H1 (cell line): ENCODE measurements at regions of chr11 and their contacts with region 1.

Region 1: DNA sequence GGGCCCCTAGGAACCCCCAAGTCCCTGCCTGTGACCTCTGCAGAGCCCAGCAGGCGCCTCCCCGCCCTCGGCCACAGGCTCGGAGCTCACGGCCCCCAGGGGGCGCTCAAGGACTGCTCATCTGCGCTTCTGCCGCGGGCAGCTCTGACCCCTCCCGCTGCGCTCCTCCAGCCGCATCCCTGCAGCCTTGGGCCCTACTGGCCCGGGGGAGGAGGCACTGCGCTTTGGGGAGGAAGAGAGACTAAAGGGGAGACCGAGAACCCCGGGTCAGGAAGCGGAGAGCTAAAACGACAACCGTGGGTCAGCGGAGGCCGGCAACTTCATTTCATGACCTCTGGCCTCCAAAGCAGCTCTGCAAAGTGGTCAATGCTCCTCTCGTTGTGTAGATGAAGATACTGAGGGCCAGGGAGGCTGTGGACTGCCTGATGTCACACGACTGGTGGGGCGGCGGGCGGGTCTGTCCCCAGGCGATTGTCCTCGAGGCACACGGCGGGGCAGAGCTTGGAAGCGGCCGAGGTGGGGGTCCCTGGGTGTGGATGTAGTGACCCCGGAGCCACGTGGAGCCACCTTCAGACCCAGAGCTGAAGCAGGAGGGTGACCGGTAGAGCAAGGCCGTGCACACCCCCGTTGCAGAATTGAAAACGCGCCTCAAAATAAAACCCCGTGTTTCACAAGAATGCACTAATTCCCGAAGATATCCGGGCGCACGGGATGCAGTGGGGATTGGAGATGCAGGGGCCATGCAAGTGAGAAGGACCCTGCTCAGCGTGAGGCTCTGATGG is 2.7 kb upstream of the KRTAP5-6 start:
- DNase-seq: peak; percentile 84 to 98
- H3K4me3 ChIP-seq: peak overlapping the region in 3 of 4 experiments; percentile 29 to 59 (median 45); a peak in 3 of 8 replicates
- H3K27ac ChIP-seq: no peak overlapping the region
- H3K4me1 ChIP-seq: peaks cover 0 to 10% (median 3%) of the 10 kb centered on the region in 4 experiments; a peak in 3 of 7 replicates
- H3K27me3 ChIP-seq: peaks cover 0 to 7% (median 0%) of the 10 kb centered on the region in 4 experiments; a peak in 3 of 7 replicates
- CTCF ChIP-seq: peak; percentile 81 to 97 (median 86)
- EP300 ChIP-seq: peak in 1 of 2 experiments; percentile 49; a peak in 1 of 3 replicates
- POLR2A ChIP-seq: no peak
- RAD21 ChIP-seq: peak; percentile 91 to 95

Region 2: DNA sequence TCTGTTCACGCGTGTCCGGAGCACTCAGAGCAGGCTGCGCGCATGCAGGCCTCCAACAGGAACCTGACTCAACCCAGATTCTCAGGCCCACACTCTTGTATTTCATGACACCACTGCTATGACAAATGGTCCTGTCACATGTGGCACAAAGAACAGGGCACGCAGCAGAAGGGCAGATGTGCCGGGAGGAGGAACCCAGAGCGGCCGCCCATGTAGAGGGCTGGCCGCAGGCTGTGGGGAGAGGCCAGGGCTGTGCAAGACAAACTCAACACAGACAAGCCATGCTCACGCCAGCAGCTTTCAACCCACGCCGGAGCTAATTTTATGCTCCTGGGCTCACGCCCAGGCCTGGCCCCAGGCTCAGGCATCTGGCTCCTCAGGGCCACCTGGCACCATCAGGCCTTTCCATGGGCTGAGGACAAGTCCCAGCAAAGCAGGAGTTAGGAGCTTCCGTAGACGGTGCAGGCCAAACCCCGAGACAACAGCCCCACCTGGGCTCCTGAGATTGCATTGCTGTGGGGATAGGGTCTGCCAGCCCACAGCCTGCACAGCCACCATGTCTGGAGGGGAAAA is 162.2 kb before region 1 on chr11:
- CTCF ChIA-PET with region 1: no interaction called
- POLR2A ChIA-PET with region 1: no interaction called
- DNase-seq: no peak
- H3K4me3 ChIP-seq: no peak overlapping the region
- H3K27ac ChIP-seq: no peak overlapping the region
- H3K4me1 ChIP-seq: peaks cover 0 to 2% (median 0%) of the 10 kb centered on the region in 4 experiments; a peak in 1 of 7 replicates
- H3K27me3 ChIP-seq: no peaks in the 10 kb centered on the region
- CTCF ChIP-seq: no peak
- EP300 ChIP-seq: no peak
- POLR2A ChIP-seq: no peak
- RAD21 ChIP-seq: no peak

Region 3: DNA sequence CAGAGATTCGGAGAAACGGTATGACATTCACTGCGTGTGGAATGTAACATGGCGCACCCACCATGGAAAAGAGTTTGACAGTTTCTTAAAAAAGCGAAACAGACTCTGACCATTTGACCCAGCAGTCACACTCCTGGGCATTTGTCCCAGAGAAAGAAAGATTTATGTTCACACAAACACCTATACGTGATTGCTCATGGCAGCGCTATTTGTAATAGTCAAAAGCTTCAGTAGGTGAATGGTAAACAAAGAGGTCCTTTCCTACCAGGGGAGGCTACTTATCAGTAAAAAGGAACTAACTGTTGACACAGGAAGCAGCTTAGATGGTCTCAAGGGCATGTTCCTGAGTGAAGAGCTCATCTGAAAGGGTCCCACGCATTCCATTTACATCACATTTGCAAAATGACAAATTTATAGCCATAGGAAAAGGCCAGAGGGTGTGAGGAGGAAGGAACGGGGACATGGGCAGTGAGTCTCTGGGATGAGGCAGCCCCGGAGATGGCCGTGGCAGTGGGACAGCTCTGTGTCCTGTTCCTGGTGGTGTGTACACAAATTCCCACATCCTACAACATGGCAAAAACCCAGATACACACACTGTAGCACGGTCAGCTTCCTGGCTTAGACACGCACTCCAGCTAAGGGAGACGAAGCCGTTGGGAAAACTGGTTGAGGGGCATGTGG is 11.9 kb before region 1 on chr11:
- CTCF ChIA-PET with region 1: interaction called, 41 read pairs
- POLR2A ChIA-PET with region 1: no interaction called
- DNase-seq: no peak
- H3K4me3 ChIP-seq: no peak overlapping the region
- H3K27ac ChIP-seq: no peak overlapping the region; the same call in 1 of the 2 replicates
- H3K4me1 ChIP-seq: no peaks in the 10 kb centered on the region
- H3K27me3 ChIP-seq: no peaks in the 10 kb centered on the region
- CTCF ChIP-seq: no peak
- EP300 ChIP-seq: no peak
- POLR2A ChIP-seq: no peak
- RAD21 ChIP-seq: no peak

Region 4: DNA sequence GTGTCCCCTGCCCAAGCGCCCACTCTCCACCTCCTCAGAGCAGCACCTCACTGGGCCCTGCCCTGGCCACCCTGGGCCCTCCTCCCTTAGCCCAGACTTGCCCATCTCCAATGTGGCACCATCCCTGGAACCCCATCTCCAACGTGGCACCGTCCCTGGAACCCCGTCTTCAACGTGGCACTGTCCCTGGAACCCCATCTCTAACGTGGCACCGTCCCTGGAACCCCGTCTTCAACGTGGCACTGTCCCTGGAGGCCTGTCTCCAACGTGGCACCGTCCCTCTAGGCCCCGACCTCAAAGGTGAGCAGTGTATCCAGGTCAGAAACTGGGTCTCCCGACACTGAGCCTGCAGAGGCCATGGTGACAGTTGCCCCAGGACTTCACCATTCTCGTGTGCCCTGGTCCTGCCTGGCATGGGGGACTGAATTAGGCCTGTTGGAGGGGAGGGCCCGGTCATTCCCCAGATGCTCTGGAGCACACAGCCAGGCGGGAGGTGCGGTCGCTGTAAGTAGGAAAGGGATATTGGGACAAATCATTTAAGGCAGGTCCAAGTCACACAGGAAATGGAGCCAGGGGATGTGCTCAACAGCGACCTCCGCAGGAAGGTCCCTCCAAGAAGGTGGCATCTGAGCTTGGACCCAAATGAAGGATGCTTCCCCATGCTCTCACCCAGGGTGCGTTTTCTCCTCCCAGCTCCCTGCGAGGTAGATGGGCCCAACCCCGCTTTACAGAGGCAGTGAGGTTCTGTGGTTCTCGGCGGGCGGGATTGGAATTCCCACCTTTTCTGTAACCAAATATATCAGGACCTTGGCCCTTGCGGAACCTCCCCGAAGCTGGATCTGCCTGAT is 71.8 kb after region 1 on chr11:
- CTCF ChIA-PET with region 1: interaction called, 16 read pairs
- POLR2A ChIA-PET with region 1: no interaction called
- DNase-seq: peak in 1 of 2 experiments; percentile 77
- H3K4me3 ChIP-seq: no peak overlapping the region
- H3K27ac ChIP-seq: no peak overlapping the region
- H3K4me1 ChIP-seq: peaks cover 0 to 6% (median 3%) of the 10 kb centered on the region in 4 experiments; a peak in 5 of 7 replicates
- H3K27me3 ChIP-seq: no peaks in the 10 kb centered on the region
- CTCF ChIP-seq: peak; percentile 44 to 85 (median 79)
- EP300 ChIP-seq: no peak
- POLR2A ChIP-seq: no peak
- RAD21 ChIP-seq: peak; percentile 32 to 44

Region 5: DNA sequence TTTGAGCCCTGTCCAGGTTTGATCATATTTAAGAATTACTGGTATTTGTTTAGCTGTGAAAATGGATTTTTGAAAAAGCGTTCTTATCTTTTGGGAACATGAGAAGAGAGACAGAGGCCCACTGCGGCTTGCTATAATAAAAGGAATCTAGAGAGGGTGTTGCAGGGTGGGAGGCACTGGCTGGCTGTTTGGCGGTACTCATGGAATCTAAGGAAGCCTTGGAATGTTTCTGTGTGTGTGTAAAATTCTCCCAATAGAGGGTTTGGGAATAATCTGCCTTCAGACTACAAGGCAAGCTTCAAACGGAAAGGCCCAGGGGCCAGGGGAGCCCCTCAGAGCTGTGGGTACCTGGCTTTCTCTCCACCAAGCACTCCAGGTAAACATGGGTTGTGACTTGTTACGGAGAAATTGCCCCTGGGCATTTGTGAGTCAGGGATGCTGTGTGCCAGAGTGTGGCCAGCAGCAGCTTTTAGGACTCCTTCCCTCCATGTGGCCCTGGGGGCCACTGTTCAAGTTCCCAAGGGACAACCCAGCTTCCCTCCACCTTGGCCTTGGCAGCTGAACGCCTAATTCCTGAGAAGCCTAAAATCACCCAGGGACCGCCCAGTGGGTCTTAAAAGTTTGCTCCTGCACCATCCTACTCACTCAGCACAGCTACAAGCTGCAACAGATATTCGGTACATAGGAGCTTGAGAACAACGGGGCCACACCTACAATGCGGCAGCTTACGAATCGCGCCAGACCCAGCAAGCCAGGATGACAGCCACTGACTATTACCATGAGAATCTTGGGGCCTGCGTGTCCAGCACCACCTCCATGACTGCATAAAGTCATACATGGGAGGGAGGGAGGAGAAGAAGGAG is 126.4 kb after region 1 on chr11:
- CTCF ChIA-PET with region 1: interaction called, 255 read pairs
- POLR2A ChIA-PET with region 1: no interaction called
- DNase-seq: no peak
- H3K4me3 ChIP-seq: no peak overlapping the region
- H3K27ac ChIP-seq: no peak overlapping the region
- H3K4me1 ChIP-seq: peaks cover 0 to 2% (median 0%) of the 10 kb centered on the region in 4 experiments; a peak in 3 of 7 replicates
- H3K27me3 ChIP-seq: no peaks in the 10 kb centered on the region; a peak in 1 of 7 replicates
- CTCF ChIP-seq: no peak
- EP300 ChIP-seq: no peak
- POLR2A ChIP-seq: no peak
- RAD21 ChIP-seq: no peak

Region 6: DNA sequence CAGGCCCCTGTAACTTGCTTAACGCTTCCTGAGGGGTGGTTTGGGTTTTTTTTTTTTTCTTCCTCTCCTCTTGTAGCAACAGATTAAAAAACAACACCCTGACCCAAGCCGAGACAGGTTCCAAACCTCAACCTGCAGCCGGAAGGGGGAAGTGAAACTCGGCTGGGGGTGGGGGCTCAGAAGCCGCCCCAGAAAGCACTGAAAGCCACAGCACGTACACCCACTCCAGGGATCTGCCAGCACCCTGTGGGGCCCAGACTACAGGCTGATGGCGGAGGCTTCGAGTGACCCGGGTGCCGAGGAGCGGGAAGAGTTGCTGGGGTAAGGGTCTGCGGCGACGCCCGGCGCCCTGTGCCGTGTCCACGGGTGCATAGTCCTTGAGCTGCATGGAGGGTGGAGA is 158.6 kb after region 1 on chr11 and contains the start of gene LSP1:
- CTCF ChIA-PET with region 1: interaction called, 18 read pairs
- POLR2A ChIA-PET with region 1: no interaction called
- DNase-seq: no peak
- H3K4me3 ChIP-seq: no peak within 1 kb of the TSS
- H3K27ac ChIP-seq: no peak within 1 kb of the TSS
- H3K4me1 ChIP-seq: no peaks in the 10 kb centered on the region
- H3K27me3 ChIP-seq: no peaks in the 10 kb centered on the region
- CTCF ChIP-seq: no peak
- EP300 ChIP-seq: no peak
- POLR2A ChIP-seq: no peak
- RAD21 ChIP-seq: no peak
- total RNA-seq, gene LSP1: not detected in 2 replicates